ENCODE measurements at regions of chr10 and their contacts with region 1.

Region 1: GRCh38 chr10:127826154-127826725 is 66.5 kb downstream of the CLRN3 start:
- DNase-seq: no peak
- ATAC-seq: no peak
- H3K4me3 ChIP-seq: no peak overlapping the region
- H3K27ac ChIP-seq: no peak overlapping the region
- H3K4me1 ChIP-seq: peaks cover 0 to 2% (median 0%) of the 10 kb centered on the region in 12 donors
- H3K27me3 ChIP-seq: no peaks in the 10 kb centered on the region
- CTCF ChIP-seq: no peak
- POLR2A ChIP-seq: no peak

Region 2: DNA sequence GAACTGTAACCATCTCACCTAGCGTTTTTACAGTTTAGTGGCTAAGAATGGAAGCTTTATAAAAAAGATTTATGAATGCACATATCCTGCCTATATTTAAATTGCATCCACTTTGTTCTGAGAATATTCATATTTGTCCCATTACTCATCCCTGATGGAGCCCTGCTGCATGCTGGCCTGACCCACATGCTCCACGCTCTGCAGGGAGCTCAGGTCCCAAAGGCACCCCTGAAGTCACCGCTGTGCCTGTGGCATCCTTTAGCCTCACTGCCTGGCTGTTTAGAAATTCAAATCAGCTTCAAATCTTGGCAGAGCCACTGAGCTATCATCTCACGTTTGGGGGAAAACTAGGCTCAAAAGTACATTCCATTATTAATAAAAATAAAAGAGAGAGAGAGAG is 1180.1 kb before region 1 on chr10:
- intact Hi-C with region 1: loop called in 1 of 10 experiments (anchors 10 kb)
- DNase-seq: no peak
- ATAC-seq: no peak
- H3K4me3 ChIP-seq: no peak overlapping the region
- H3K27ac ChIP-seq: no peak overlapping the region
- H3K4me1 ChIP-seq: peaks cover 0 to 3% (median 0%) of the 10 kb centered on the region in 12 donors
- H3K27me3 ChIP-seq: no peaks in the 10 kb centered on the region
- CTCF ChIP-seq: no peak
- POLR2A ChIP-seq: no peak